Right ventricle myocardium inferior (tissue), 1 donor: ENCODE measurements at regions of chr2 and their contacts with region 1.

Region 1: GRCh38 chr2:217785544-217786045 is 217.2 kb downstream of the TNS1 start:
- DNase-seq: peak; percentile 89
- ATAC-seq: peak; percentile 80

Region 2: DNA sequence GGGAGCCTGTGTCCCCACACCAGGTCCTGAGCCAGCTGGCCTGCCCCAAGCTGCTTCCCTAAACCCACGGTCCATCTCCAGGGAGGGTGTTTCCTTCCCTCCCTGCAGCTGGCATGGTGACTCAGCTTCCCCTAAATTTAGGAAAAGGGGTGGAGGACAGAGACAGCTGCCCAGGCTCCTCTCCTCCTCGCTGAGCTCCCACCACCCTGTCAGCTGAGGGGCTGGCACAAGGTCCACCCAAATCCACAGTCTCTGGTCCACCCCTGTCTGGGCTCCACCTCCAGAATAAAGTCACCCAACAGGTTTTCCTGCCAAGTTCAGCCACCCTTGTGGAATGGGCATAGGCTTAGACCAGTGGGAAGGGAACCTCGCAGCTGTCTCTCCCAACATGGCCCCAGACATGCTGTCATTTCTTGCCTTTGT is 60.7 kb after region 1 on chr2:
- intact Hi-C with region 1: no loop called
- DNase-seq: peak; percentile 78
- ATAC-seq: peak; percentile 41

Region 3: GRCh38 chr2:217886720-217887309 is 101.2 kb after region 1 on chr2:
- intact Hi-C with region 1: loop called (anchors 2 kb)
- DNase-seq: peak; percentile 78
- ATAC-seq: peak; percentile 35

Region 4: GRCh38 chr2:217943446-217944389 is 158.1 kb after region 1 on chr2:
- intact Hi-C with region 1: loop called (anchors 5 kb)
- DNase-seq: peak; percentile 92
- ATAC-seq: peak; percentile 91

Region 5: GRCh38 chr2:217988014-217988839 is 202.6 kb after region 1 on chr2:
- intact Hi-C with region 1: loop called (anchors 1 kb)
- DNase-seq: peak; percentile 83
- ATAC-seq: peak; percentile 88

Region 6: DNA sequence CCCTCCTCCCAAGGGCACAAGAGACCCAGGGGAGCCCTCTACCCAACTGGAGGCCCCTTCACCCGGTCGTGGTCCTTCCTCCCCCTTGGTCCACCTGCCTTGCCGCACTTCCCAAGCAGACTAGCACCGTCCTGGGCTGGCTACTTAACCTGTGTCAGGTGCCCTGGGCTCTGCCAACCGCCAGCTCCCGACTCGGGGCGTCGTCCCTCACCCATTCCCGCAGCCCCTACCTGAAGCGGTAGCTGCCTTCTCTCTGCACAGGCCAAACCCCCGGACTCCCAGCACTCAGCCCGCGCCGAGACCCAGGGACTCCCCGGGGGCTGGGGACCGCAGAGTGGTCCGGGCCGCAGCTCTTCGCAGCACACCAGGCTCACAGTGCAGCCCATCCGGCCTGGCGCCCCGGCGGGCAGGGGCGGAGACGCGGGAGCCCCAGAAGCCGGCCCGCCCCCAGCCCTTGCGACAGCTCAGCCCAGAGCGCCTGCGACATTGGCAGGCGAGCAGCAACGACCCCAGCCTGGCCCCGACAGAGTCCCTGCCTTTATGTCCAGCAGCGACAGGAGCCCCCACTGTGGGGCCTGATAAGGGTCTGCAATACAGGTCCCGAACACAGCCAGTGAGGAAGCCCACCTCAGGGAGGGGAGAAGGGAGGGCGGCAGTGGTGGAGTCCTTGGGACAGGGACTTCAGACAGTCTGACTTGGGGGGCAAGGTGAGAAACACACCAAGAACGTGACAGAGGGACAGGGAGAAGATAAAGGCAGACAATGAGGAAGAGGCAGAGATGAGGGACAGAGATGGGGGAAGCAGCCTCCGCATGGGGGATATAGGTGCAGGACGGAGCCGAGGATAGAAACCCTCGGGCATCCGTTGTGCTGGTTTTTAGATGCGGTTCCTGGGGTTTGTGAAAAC is 248.2 kb after region 1 on chr2:
- intact Hi-C with region 1: loop called (anchors 2 kb)
- DNase-seq: no peak
- ATAC-seq: no peak

Region 7: GRCh38 chr2:218069606-218070300 is 284.2 kb after region 1 on chr2:
- intact Hi-C with region 1: loop called (anchors 2 kb)
- DNase-seq: no peak
- ATAC-seq: no peak